ENCODE measurements at regions of chr5 and their contacts with region 1.

Region 1: DNA sequence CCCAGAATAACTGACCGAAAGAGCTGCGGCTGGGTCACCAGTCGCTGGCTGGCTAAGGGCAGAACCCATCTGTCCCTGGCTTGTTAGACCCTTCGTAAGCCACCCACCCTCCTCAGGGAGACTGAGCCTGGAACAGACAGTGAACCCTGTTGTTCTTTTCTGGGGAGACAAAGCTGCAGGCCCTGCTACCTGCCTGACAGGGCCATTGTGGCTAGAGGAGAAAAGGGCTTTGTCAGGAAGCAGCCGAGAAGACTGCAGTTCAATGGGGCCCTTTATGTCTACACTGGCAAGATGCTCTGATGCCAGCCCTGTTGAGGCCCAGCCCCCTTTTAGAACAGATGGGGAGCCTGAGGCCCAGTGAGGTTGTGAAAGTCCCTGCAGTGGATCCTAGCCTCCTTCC is 3.7 kb upstream of the NIPAL4 start:
- DNase-seq: no peak
- ATAC-seq: no peak
- H3K4me3 ChIP-seq: no peak overlapping the region
- H3K4me3 Mint-ChIP-seq: no peak overlapping the region
- H3K27ac ChIP-seq: no peak overlapping the region
- H3K27ac Mint-ChIP-seq: no peak overlapping the region
- H3K4me1 ChIP-seq: peaks cover 48 to 52% of the 10 kb centered on the region in 2 donors
- H3K4me1 Mint-ChIP-seq: peaks cover 54% of the 10 kb centered on the region
- H3K27me3 ChIP-seq: no peaks in the 10 kb centered on the region
- H3K27me3 Mint-ChIP-seq: no peaks in the 10 kb centered on the region
- CTCF ChIP-seq: no peak

Region 2: GRCh38 chr5:157471709-157472108 is 15.4 kb after region 1 on chr5:
- CTCF ChIA-PET with region 1: interaction called, 31 read pairs
- POLR2A ChIA-PET with region 1: interaction called, 3 read pairs
- intact Hi-C with region 1: loop called (anchors 2 kb)
- DNase-seq: peak; percentile 47
- ATAC-seq: peak; percentile 67
- H3K4me3 ChIP-seq: no peak overlapping the region
- H3K4me3 Mint-ChIP-seq: no peak overlapping the region
- H3K27ac ChIP-seq: peak overlapping the region in 1 of 2 donors; percentile 24
- H3K27ac Mint-ChIP-seq: peak overlapping the region; percentile 68
- H3K4me1 ChIP-seq: peaks cover 5 to 29% of the 10 kb centered on the region in 2 donors
- H3K4me1 Mint-ChIP-seq: peaks cover 51% of the 10 kb centered on the region
- H3K27me3 ChIP-seq: no peaks in the 10 kb centered on the region
- H3K27me3 Mint-ChIP-seq: no peaks in the 10 kb centered on the region
- CTCF ChIP-seq: peak; percentile 48